ENCODE measurements at regions of chr1 and their contacts with region 1.

Region 1: GRCh38 chr1:44594871-44595746 is 79.2 kb downstream of the TMEM53 start:
- DNase-seq: peak; percentile 77
- H3K4me3 ChIP-seq: no peak overlapping the region
- H3K27ac ChIP-seq: no peak overlapping the region
- H3K4me1 ChIP-seq: no peaks in the 10 kb centered on the region
- H3K27me3 ChIP-seq: peaks cover 35% of the 10 kb centered on the region
- CTCF ChIP-seq: peak; percentile 99

Region 2: GRCh38 chr1:44220001-44220733 is 374.9 kb before region 1 on chr1:
- intact Hi-C with region 1: loop called (anchors 10 kb)
- DNase-seq: no peak
- H3K4me3 ChIP-seq: no peak overlapping the region
- H3K27ac ChIP-seq: no peak overlapping the region
- H3K4me1 ChIP-seq: peaks cover 5% of the 10 kb centered on the region
- H3K27me3 ChIP-seq: no peaks in the 10 kb centered on the region
- CTCF ChIP-seq: no peak

Region 3: DNA sequence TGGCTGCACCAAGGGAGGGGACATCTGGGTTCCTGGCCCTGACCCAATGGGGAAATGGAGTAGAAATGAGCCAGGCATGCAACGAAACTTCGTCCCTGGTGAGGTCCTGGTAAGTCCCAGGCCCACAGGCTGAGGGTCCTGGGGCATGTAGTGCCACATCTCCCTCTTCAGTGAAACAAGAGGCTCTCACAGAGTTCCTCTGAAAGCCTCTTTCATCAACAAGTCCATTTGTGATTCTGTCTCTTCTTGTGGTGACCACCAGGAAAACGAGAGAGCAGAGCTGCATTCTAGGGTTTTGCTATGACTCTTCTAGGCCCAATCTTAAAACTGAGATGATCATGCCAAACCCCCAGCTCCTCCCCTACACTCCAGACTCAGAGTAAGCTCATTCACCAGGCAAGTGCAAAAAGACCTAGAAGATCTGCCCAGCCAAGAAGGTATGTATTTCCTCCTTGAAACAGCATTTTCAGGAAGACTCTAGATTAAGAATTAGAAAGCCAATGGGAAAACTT is 214.4 kb before region 1 on chr1:
- intact Hi-C with region 1: loop called (anchors 5 kb)
- DNase-seq: no peak
- H3K4me3 ChIP-seq: no peak overlapping the region
- H3K27ac ChIP-seq: no peak overlapping the region
- H3K4me1 ChIP-seq: no peaks in the 10 kb centered on the region
- H3K27me3 ChIP-seq: peaks cover 6% of the 10 kb centered on the region
- CTCF ChIP-seq: no peak

Region 4: GRCh38 chr1:44519035-44519676 is 76.0 kb before region 1 on chr1:
- intact Hi-C with region 1: no loop called
- DNase-seq: no peak
- H3K4me3 ChIP-seq: no peak overlapping the region
- H3K27ac ChIP-seq: no peak overlapping the region
- H3K4me1 ChIP-seq: peaks cover 3% of the 10 kb centered on the region
- H3K27me3 ChIP-seq: peaks cover 33% of the 10 kb centered on the region
- CTCF ChIP-seq: no peak

Measured in left ventricle myocardium inferior (tissue), 1 donor.